ENCODE measurements at regions of chr14 and their contacts with region 1.

Region 1: DNA sequence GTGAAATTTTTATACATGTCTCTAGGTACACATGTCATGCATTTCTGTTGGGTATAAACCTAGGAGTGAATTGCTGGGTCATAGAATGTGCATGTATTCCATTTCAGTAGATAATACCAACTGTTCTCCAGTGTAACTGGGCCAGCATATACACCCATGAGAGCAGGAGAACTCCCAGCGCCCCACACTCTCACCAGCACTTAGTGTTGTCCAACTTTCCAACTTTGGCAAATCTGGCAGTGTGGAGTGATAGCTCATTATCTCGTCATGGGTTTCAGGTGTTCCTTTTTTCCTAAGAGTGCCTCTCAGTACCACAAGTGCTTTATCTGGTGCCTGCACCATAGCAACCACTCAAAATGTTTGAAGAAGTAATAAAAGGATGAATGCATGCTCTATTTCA is 40.1 kb downstream of the NGB start:
- DNase-seq: no peak
- H3K4me3 ChIP-seq: no peak overlapping the region
- H3K27ac ChIP-seq: no peak overlapping the region
- H3K4me1 ChIP-seq: no peaks in the 10 kb centered on the region
- H3K27me3 ChIP-seq: no peaks in the 10 kb centered on the region
- CTCF ChIP-seq: no peak
- POLR2A ChIP-seq: no peak

Region 2: DNA sequence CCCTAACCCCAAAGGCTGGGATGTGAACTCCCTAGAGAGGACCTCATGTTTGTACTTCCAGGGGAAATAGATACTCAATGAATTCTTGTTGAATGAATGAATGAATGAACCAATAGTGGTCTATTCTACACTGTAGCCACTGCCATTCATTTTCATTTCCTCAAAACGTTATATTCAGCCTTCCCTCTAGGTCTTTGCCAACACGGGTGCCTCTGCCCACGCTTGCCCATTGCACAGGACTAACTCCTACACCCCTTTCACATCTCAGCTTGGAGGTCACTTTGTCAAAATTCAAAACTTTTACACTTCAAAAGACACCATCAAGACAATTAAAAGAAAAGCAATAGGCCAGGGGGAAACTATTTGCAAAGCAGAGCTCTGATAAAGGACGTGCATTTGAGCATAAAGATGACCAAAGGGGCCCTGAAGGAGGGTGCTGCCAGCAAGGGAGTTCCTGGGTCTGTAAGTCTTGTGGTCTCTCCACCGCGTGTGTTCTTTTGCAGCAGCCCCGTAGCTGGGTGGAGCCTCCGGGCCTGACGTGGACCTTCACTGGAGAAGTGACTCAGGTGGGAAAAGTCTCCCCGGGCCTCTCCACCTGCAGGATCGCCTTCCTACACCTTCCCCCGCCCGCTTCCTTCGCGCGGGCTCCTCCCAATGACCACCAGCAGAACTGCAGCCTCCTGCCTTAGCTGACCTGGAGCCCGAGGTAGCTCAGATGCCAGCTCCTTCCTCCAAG is 17.8 kb before region 1 on chr14:
- intact Hi-C with region 1: loop called (anchors 2 kb)
- DNase-seq: no peak
- H3K4me3 ChIP-seq: no peak overlapping the region
- H3K27ac ChIP-seq: no peak overlapping the region
- H3K4me1 ChIP-seq: no peaks in the 10 kb centered on the region
- H3K27me3 ChIP-seq: peaks cover 0 to 3% of the 10 kb centered on the region in 2 donors
- CTCF ChIP-seq: peak in 2 of 3 donors; percentile 50 to 54
- POLR2A ChIP-seq: no peak

Measured in breast epithelium (tissue), 4 donors.